ENCODE measurements at regions of chr7 and their contacts with region 1.

Region 1: GRCh38 chr7:143372070-143372469 is 9.1 kb upstream of the ZYX start:
- DNase-seq: peak; percentile 88
- H3K4me3 Mint-ChIP-seq: peak overlapping the region; percentile 7
- H3K27ac Mint-ChIP-seq: peak overlapping the region; percentile 70
- H3K4me1 Mint-ChIP-seq: peaks cover 51% of the 10 kb centered on the region
- H3K27me3 Mint-ChIP-seq: no peaks in the 10 kb centered on the region

Region 2: DNA sequence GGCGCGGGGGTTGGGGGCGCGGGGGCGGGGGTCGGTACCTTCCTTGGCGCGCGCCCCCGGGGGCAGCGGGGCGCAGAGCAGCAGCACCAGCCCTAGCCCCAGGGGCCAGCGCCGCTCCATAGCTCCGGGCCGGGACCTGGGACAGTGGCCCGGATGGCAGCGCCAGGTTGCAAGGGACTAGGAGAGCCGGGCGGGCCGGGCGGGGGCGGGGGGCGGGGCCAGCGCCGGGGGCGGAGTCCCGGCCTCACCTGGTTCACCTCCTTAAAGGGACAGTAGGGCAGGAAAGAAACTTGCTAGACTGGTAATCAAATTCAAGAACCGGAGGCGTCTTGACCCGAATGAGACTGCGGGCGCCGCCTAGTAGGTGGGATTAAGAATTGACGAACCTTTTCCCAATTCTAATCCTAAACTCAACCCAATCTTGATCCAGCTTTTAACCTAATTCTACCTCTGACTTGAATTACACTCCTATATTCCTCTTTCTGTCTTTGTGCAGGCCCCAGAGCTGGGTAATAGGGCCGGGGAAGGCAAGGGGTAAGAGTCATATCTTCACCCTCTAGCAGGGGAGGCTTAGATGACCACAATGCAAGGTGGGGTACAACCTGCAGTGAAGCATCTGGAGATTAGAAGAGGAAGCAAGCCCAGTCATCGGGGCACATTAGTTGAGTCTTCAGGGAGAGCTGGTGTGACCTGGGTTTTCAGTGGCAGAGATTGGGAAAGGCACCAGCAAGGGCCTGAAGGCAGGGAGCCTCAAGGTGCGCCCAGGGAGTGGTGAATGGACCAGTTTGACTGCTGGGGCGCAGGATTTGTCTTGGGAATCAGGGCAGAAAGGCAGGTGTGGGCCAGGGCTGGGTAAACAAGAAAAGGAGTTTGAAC is 36.9 kb after region 1 on chr7 and contains the start of gene EPHA1:
- CTCF ChIA-PET with region 1: interaction called, 5 read pairs
- POLR2A ChIA-PET with region 1: no interaction called
- intact Hi-C with region 1: loop called (anchors 5 kb)
- DNase-seq: peak; percentile 63
- H3K4me3 Mint-ChIP-seq: peak within 1 kb of the TSS; percentile 70
- H3K27ac Mint-ChIP-seq: peak within 1 kb of the TSS; percentile 75
- H3K4me1 Mint-ChIP-seq: peaks cover 48% of the 10 kb centered on the region
- H3K27me3 Mint-ChIP-seq: no peaks in the 10 kb centered on the region
- total RNA-seq, gene EPHA1: 2.9 to 4.3 TPM